G401 (cell line): ENCODE measurements at regions of chr10 and their contacts with region 1.

Region 1: GRCh38 chr10:116809483-116810119 is 39.7 kb upstream of the ENO4 start:
- DNase-seq: no peak

Region 2: GRCh38 chr10:116849248-116850057 is 39.9 kb after region 1 on chr10 and contains the start of gene ENO4:
- in situ Hi-C with region 1: no loop called
- DNase-seq: peak; percentile 94
- total RNA-seq, gene ENO4: 0.49 TPM in 1 of 2 replicates, not detected in the other

Region 3: DNA sequence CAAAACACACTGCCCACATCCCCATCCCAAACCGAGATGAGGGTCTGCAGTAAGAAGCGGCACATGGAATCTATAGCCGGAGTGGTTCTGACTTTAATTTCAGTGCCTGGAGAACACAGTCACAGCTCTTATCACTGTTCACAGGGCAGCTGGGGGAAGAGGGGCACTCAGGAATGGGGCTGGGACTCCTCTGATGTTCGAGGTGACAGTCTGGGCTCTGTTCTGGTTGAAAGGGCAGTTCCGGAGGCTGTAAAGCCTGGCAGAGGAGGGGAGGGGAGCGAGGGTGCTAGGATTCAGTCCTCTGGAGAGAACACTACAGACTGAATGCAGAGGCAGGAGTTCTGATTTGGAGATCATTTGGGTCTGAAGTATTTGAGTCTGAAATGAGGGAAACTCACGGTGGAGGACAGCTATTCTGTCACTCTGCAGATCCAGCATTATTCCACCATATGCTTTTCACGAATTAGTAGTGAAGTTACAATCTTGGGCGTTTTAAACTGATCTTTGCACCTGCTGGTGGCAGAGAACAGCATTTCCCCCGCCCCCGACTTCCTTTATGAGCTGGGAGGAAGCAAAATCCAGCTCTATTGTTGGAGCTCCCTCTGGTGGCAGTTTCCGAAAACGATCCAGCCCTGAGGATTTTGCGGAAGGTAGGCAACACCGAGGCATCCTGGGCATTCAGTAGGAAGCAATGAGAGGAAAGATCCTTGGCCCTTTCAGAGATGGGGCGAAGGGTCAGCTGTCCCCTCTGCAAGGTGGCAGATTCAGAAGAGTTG is 365.0 kb after region 1 on chr10:
- in situ Hi-C with region 1: loop called (anchors 25 kb)
- DNase-seq: peak; percentile 90